Activated CD4-positive, alpha-beta memory T cell treated with anti-CD3 and anti-CD28 coated beads for 36 hours (primary cell): ENCODE measurements at regions of chr7 and their contacts with region 1.

Region 1: DNA sequence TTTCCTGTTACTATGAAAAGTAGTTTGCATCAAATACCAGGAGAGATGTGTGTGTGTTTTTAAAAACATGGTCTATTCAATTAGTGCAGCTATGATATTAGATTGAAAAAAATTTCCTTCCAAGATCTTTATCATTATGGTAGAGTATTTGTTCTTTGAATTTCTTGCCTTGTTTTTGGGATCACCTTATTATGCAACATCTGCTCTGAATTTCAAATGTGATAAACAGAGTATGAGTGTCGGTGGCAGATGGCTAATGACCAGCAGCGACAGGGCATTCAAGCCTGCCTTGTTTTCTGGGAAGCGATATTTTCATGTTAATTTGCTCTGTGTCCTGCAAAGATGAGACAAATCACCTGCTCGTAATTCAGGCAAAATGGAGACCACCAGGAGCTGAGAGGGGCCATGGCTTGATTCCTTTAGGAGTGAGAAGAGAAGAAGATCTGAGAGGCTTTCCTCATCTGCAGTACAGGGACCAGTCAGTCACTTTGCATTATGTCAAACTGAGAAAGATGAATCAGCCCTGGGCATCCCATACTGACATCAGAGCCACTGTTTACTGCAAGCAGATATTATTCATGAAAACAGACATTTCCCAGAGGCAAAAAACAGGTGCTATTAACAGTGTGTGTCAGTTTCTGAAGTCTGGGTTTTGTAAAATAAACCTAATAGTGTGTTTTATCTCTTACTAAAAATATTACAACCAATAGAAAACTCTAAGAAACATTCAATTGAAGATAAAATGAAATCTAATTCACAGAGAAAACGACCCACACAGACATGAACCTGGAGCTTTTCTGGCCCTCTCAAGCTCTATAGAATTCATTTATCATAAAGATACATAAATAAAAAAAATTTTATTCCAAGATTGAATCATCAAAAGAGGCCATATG is 67.6 kb downstream of the CDK6 start:
- DNase-seq: peak; percentile 64
- H3K4me3 Mint-ChIP-seq: peak overlapping the region; percentile 48
- H3K27ac Mint-ChIP-seq: peak overlapping the region; percentile 83
- H3K4me1 Mint-ChIP-seq: peaks cover 72% of the 10 kb centered on the region
- H3K27me3 Mint-ChIP-seq: no peaks in the 10 kb centered on the region

Region 2: GRCh38 chr7:92621026-92621540 is 147.7 kb before region 1 on chr7:
- CTCF ChIA-PET with region 1: interaction called, 4 read pairs
- POLR2A ChIA-PET with region 1: no interaction called
- intact Hi-C with region 1: loop called (anchors 1 kb)
- DNase-seq: peak; percentile 86
- H3K4me3 Mint-ChIP-seq: peak overlapping the region; percentile 49
- H3K27ac Mint-ChIP-seq: peak overlapping the region; percentile 93
- H3K4me1 Mint-ChIP-seq: peaks cover 53% of the 10 kb centered on the region
- H3K27me3 Mint-ChIP-seq: no peaks in the 10 kb centered on the region

Region 3: GRCh38 chr7:92667816-92668535 is 100.8 kb before region 1 on chr7:
- CTCF ChIA-PET with region 1: no interaction called
- POLR2A ChIA-PET with region 1: no interaction called
- intact Hi-C with region 1: no loop called
- DNase-seq: no peak
- H3K4me3 Mint-ChIP-seq: no peak overlapping the region
- H3K27ac Mint-ChIP-seq: peak overlapping the region; percentile 49
- H3K4me1 Mint-ChIP-seq: peaks cover 63% of the 10 kb centered on the region
- H3K27me3 Mint-ChIP-seq: no peaks in the 10 kb centered on the region

Region 4: DNA sequence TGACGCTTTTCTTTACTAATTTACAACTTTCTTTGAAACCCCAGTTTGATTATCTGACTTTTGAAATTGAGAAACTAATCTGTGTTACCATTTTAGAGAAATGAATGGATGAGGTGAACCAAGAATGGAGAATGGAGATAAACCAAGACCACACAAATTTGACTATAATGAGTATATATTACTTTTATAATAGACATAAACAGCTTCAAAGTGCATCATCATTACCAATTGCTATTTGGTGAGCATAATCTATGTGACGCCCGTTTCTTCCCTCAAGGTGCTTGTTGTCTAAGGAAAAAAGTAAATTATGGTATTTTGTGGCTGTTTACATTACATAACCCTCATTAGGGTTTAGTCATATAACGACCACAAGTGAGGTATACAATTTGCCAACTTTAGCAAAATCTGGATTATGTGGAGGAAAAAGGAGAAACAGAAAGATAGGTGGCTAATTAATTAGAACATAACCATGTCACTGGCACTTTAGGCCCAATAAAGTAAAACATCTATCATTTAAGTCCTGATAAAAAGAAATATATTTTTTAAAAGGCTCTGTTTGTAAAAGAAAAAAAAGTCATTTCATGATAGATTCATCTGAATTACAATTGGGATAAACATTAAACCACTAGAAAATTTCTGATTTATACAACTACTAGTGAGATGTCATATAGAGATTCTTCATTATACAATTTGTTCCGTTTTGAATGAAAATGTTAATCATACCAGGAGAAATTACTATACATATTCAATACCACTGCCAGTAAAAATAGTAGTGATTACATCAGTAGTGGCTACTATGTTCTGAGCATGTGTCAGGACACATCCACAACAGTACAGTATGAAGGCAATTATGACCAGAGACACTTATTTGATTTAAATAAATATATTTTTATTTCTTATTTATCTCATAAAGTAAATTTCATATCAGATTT is 60.4 kb before region 1 on chr7:
- CTCF ChIA-PET with region 1: no interaction called
- POLR2A ChIA-PET with region 1: no interaction called
- intact Hi-C with region 1: loop called (anchors 1 kb)
- DNase-seq: no peak
- H3K4me3 Mint-ChIP-seq: no peak overlapping the region
- H3K27ac Mint-ChIP-seq: peak overlapping the region; percentile 88
- H3K4me1 Mint-ChIP-seq: peaks cover 55% of the 10 kb centered on the region
- H3K27me3 Mint-ChIP-seq: no peaks in the 10 kb centered on the region

Region 5: GRCh38 chr7:92797693-92798092 is 28.9 kb after region 1 on chr7:
- CTCF ChIA-PET with region 1: interaction called, 3 read pairs
- POLR2A ChIA-PET with region 1: interaction called, 3 read pairs
- intact Hi-C with region 1: loop called (anchors 1 kb)
- DNase-seq: peak; percentile 64
- H3K4me3 Mint-ChIP-seq: no peak overlapping the region
- H3K27ac Mint-ChIP-seq: no peak overlapping the region
- H3K4me1 Mint-ChIP-seq: peaks cover 32% of the 10 kb centered on the region
- H3K27me3 Mint-ChIP-seq: no peaks in the 10 kb centered on the region

Region 6: GRCh38 chr7:92824901-92825480 is 56.2 kb after region 1 on chr7:
- CTCF ChIA-PET with region 1: no interaction called
- POLR2A ChIA-PET with region 1: no interaction called
- intact Hi-C with region 1: loop called (anchors 2 kb)
- DNase-seq: no peak
- H3K4me3 Mint-ChIP-seq: peak overlapping the region; percentile 56
- H3K27ac Mint-ChIP-seq: peak overlapping the region; percentile 44
- H3K4me1 Mint-ChIP-seq: peaks cover 75% of the 10 kb centered on the region
- H3K27me3 Mint-ChIP-seq: no peaks in the 10 kb centered on the region